ENCODE measurements at regions of chr1 and their contacts with region 1.

Region 1: GRCh38 chr1:167442124-167442848 is 76.0 kb downstream of the CD247 start:
- DNase-seq: peak; percentile 39
- ATAC-seq: peak; percentile 94
- H3K4me3 ChIP-seq: no peak overlapping the region
- H3K27ac ChIP-seq: no peak overlapping the region
- H3K4me1 ChIP-seq: no peaks in the 10 kb centered on the region
- H3K27me3 ChIP-seq: no peaks in the 10 kb centered on the region
- CTCF ChIP-seq: peak; percentile 93

Region 2: DNA sequence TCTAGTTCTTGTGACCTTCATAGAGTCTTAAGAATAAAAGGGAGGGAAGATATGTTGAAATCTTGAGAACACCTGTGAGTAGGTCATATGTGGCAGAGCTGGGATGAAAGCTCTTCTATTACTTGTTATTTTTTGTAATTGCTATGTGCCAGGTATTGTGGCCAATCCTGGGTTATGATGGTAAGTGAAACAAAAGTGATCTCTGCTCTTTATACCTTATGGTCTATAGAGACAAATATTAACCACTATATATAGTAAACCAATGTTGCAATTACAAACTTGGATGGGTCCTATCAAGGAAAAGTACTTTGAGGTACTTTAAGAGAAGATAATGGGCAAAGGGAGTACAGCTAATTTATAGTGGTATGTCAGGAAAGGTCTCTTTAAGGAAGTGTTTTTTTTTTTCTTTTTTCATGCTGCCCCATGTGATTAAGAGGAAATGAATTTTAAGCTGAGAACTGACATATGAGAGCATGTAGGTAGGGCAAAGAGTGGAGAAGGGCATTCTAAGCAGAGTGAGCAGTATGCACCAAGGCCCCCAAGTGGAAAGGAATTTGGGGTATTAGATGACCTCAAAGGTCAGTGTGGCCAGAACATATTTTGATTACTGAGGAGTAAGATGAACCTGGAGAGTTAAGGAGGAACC is 178.3 kb before region 1 on chr1:
- CTCF ChIA-PET with region 1: no interaction called
- POLR2A ChIA-PET with region 1: no interaction called
- in situ Hi-C with region 1: no loop called
- intact Hi-C with region 1: loop called (anchors 1 kb)
- DNase-seq: no peak
- ATAC-seq: no peak
- H3K4me3 ChIP-seq: no peak overlapping the region
- H3K27ac ChIP-seq: no peak overlapping the region
- H3K4me1 ChIP-seq: peaks cover 5% of the 10 kb centered on the region; the same call in 1 of the 2 replicates
- H3K27me3 ChIP-seq: no peaks in the 10 kb centered on the region
- CTCF ChIP-seq: no peak

Region 3: DNA sequence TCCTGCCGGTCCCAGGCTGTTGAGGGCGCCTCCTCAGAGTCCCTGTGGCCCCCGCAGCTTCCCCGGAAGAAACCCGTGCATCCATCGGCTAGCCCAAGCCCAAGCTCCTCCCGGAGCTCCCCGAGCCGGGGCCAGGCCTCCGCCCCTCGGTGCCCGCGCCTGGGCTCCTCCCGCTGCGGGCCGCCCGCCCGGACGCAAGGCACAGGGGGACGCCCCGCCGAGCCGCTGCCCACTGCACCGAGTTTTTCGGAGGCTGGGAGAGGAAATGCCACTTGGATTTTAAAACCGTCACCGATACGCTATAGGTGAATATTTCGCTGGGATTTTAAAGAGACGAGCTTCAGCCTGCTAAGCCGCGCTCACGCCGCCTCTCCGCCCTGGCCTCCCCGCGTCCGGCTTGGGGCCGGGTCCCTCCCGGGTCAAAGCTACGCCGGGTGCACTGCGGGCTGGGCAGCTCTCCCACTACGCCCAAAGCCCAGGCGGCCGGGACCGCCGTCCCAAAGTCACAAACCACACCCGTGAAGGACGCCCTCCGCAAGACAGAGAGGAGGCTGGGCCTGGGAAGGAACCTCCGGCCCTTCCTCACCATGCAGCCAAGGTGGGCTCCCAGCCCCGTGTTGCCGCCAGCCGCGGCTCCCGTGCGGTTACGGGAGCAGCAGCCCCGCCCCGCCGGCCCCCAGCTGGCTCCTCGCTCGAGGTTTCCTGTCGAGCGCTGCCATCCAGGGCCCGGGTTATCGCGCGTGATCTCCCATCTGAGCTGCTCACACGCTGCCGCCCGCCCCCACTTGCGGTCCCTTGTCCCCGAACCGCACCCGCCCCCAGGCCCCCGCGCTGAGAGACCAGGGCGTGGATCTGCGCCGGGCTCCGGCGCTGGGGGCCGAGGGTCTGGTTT is 12.9 kb after region 1 on chr1:
- CTCF ChIA-PET with region 1: interaction called, 10 read pairs
- POLR2A ChIA-PET with region 1: no interaction called
- in situ Hi-C with region 1: no loop called
- intact Hi-C with region 1: no loop called
- DNase-seq: no peak
- ATAC-seq: peak; percentile 83
- H3K4me3 ChIP-seq: peak overlapping the region; percentile 60 to 75
- H3K27ac ChIP-seq: no peak overlapping the region; the same call in 1 of the 2 replicates
- H3K4me1 ChIP-seq: 0 out of 2 replicates have a peak, but pooled peaks cover 2% of the 10 kb centered on the region
- H3K27me3 ChIP-seq: no peaks in the 10 kb centered on the region
- CTCF ChIP-seq: no peak

Measured in Panc1 (cell line).